Aorta (tissue), 5 donors: ENCODE measurements at regions of chr9 and their contacts with region 1.

Region 1: GRCh38 chr9:84397151-84397728 is 56.7 kb upstream of the SLC28A3 start:
- DNase-seq: peak; percentile 61 to 82
- ATAC-seq: peak; percentile 88
- H3K4me3 ChIP-seq: no peak overlapping the region
- H3K27ac ChIP-seq: no peak overlapping the region
- H3K4me1 ChIP-seq: no peaks in the 10 kb centered on the region
- H3K27me3 ChIP-seq: no peaks in the 10 kb centered on the region

Region 2: DNA sequence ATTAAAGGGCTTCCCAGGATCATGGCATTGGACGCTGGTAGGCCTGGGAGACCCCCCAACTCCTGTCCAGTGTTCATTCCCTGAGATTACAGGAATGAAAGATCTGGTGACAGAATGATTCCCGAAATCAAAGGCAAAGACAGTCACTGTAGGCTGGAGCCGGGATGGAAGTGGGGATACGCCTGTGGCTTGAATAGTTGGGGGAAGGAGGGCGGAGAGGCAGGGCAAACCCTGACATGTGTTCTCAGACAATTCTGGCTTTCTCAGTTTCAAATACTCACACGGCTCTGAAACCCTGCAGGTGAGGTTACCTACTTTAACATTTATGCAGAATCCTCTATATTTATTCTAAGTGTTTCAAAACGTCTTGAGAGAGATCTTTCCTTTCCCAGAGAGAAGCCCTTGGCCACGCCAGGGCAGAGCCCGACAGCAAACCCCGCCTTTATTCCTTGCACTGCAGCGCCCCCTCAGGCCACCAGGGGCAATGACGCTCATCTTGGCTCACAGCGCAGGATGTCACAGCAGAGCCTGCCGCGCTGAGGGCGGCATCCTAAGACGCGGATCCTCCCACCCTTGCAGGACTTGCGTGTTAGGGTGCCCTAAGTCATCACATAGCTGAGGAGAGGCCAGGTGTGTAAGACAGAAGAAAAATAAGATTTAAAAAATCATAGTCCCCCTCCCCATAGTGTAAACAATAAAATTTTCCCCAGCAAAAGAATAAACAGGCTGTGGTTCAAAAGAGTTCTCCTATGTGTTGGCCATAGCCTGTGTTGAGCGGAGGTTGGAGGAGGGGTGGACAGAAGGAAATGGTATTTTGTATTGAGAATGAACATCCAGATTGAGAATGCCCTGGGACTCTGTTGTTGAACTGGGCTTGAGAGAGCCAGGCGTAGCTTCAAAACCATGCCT is 556.8 kb after region 1 on chr9:
- intact Hi-C with region 1: loop called (anchors 10 kb)
- DNase-seq: peak; percentile 77 to 95
- ATAC-seq: peak; percentile 92
- H3K4me3 ChIP-seq: no peak overlapping the region
- H3K27ac ChIP-seq: no peak overlapping the region
- H3K4me1 ChIP-seq: no peaks in the 10 kb centered on the region
- H3K27me3 ChIP-seq: no peaks in the 10 kb centered on the region

Region 3: GRCh38 chr9:85258823-85259370 is 861.7 kb after region 1 on chr9:
- intact Hi-C with region 1: loop called in 1 of 2 experiments (anchors 5 kb)
- DNase-seq: peak; percentile 65 to 80
- ATAC-seq: peak; percentile 87
- H3K4me3 ChIP-seq: no peak overlapping the region
- H3K27ac ChIP-seq: no peak overlapping the region
- H3K4me1 ChIP-seq: no peaks in the 10 kb centered on the region
- H3K27me3 ChIP-seq: no peaks in the 10 kb centered on the region

Region 4: GRCh38 chr9:85610074-85610860 is 1213.0 kb after region 1 on chr9:
- intact Hi-C with region 1: loop called (anchors 5 kb)
- DNase-seq: no peak
- ATAC-seq: peak; percentile 74
- H3K4me3 ChIP-seq: peak overlapping the region; percentile 31 to 41
- H3K27ac ChIP-seq: no peak overlapping the region
- H3K4me1 ChIP-seq: no peaks in the 10 kb centered on the region
- H3K27me3 ChIP-seq: no peaks in the 10 kb centered on the region